ENCODE measurements at regions of chr18 and their contacts with region 1.

Region 1: DNA sequence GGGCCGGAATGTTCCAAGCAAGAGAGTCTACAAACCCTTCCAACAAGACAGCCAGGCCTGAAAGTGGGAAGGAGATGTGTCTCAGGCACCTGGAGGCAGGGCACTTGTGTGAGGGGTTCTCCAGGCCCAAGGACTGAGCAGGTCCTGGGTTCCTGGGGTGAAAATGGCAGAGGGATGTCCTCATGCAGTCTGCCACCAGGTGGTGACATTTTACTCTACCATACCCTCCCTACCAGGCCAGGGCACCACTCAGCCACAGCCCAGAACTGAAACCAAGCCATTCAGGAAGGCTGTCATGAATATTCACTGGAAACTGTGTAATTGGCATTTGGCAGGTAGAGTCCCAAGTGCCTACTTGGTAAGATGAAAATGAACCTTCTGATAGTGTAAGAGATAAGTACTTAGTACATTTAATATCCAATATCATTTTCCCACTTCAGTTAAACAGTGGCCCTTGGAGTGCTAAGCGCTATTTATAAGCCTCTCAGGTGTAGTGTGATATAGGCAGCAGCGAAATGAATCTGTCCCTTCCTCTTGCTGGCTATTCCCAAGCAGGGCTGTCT is 185.1 kb downstream of the MYO5B start:
- DNase-seq: peak; percentile 10
- ATAC-seq: peak; percentile 49 to 85 (median 56)
- H3K4me3 ChIP-seq: no peak overlapping the region
- H3K27ac ChIP-seq: no peak overlapping the region
- H3K4me1 ChIP-seq: no peaks in the 10 kb centered on the region
- H3K27me3 ChIP-seq: peaks cover 0 to 27% (median 7%) of the 10 kb centered on the region in 7 donors
- CTCF ChIP-seq: peak in 7 of 9 donors; percentile 47 to 55 (median 52)

Region 2: GRCh38 chr18:50194631-50195532 is 185.0 kb after region 1 on chr18 and contains the start of gene MYO5B:
- intact Hi-C with region 1: loop called in 6 of 10 experiments (anchors 5 to 10 kb)
- DNase-seq: peak in 1 of 2 donors; percentile 25
- ATAC-seq: peak; percentile 46 to 90 (median 64)
- H3K4me3 ChIP-seq: peak within 1 kb of the TSS; percentile 21 to 60 (median 53)
- H3K27ac ChIP-seq: no peak within 1 kb of the TSS
- H3K4me1 ChIP-seq: peaks cover 0 to 13% (median 11%) of the 10 kb centered on the region in 9 donors
- H3K27me3 ChIP-seq: peaks cover 16 to 92% (median 79%) of the 10 kb centered on the region in 7 donors
- CTCF ChIP-seq: peak in 8 of 9 donors; percentile 7 to 56 (median 30)
- total RNA-seq, gene MYO5B: 0.20 to 3.7 (median 1.3) TPM

Region 3: DNA sequence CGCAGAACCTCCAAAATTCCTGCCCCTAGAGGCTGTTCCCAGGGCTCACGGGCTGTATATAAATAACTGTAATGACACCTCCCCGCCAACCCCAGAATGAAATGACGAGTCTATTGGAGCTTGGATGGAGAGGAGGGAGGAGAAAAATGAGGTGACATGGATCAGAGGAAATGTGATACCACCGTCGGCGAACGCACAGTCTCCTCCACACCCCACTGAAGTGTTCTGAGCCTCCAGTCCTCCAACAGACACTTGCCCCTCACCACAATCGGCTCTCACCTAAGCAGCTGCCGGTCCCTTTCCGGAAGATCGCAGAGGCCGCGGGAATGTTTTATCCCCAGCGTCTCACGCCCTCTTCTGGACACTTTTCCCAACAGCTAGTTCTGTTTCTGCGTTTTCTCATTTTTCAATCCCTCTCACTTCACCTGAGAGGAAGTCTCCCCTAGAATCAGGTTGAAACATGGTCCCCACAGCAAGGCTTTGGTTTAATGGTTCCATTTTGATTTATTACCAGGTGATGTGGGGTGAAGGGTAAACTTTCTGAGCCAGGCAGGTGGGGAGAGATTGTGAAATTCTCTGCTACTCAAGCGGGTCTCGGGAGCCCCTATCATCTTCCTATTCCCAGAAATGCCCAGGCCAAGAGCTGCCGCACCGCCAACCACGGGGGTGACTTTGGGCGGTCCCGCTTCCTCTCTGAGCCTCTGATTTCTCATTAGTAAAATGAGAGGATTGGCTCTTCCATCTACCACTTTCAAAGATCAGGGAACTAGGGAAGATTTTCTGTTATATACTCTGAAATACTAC is 194.1 kb after region 1 on chr18:
- intact Hi-C with region 1: loop called in 5 of 10 experiments (anchors 5 to 10 kb)
- DNase-seq: peak; percentile 14 to 22
- ATAC-seq: peak in 6 of 8 donors; percentile 39 to 66 (median 44)
- H3K4me3 ChIP-seq: peak overlapping the region in 1 of 10 donors; percentile 10
- H3K27ac ChIP-seq: no peak overlapping the region
- H3K4me1 ChIP-seq: peaks cover 0 to 9% (median 0%) of the 10 kb centered on the region in 9 donors
- H3K27me3 ChIP-seq: peaks cover 0 to 47% (median 19%) of the 10 kb centered on the region in 7 donors
- CTCF ChIP-seq: peak; percentile 13 to 68 (median 56)

Region 4: DNA sequence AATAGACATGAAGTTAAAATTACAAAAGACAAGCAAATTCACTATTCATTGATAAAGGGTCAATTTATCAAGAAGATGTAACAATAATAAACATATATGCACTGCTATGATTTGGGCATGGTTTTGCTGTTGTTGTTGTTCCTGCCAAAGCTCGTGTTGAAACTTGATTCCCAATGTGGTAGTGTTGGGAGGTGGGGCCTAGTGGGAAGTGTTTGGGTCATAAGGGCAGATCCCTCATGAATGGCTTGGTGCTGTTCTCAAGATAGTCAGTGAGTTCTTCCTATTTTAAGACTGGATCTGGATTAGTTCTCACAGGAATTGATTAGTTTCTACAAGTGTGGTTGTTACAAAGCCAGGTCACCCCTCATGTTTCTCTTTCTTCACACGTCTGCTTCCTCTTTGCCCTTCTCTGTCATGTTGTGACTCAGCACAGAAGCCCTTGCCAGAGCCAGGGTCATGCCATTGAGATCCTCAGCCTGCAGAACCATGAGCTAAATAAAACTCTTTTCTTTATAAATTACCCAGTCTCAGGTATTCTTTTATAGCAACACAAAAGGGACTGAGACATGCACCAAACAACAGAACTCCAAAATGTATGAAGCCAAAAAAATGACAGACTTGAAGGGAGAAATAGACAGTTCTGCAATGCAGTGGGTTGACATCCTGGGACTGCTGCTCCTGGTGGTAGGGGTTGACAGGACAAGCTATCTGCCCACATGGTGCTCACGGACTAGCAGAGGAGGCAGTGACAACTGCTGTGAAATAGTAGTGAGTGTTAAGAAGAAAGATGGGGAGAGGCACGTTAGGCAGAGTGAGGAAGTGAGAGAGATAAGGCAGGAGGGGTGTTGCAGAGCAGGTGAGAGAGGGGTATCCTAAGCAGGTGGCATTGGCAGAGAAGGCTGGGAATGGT is 346.4 kb after region 1 on chr18:
- intact Hi-C with region 1: loop called in 2 of 10 experiments (anchors 10 kb)
- DNase-seq: no peak
- ATAC-seq: peak in 2 of 8 donors; percentile 62 to 63
- H3K4me3 ChIP-seq: no peak overlapping the region
- H3K27ac ChIP-seq: no peak overlapping the region
- H3K4me1 ChIP-seq: peaks cover 0 to 16% (median 0%) of the 10 kb centered on the region in 9 donors
- H3K27me3 ChIP-seq: peaks cover 0 to 26% (median 8%) of the 10 kb centered on the region in 7 donors
- CTCF ChIP-seq: peak in 1 of 9 donors; percentile 18

Measured in heart right ventricle (tissue), 16 donors.